HepG2 (cell line): ENCODE measurements at regions of chr2 and their contacts with region 1.

Region 1: DNA sequence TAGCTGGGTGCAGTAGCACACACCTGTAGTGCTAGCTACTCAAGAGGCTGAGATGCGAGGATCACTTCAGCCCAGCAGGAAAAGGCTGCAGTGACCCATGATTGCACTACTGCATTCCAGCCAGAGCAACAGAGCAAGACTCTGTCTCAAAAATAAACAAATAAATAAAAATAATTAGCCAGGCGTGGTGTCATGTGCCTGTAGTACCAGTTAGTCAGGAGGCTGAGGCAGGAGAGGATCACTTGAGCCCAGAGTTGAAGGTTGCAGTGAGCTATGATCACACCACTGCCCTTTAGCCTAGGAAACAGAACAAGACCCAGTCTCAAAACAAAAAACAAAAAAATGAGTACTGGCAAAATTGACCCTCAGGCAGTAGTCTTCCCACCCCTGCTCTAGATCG is 61.9 kb upstream of the PPP1CB start:
- DNase-seq: no peak
- ATAC-seq: no peak
- H3K4me3 ChIP-seq: no peak overlapping the region
- H3K27ac ChIP-seq: no peak overlapping the region
- H3K4me1 ChIP-seq: peaks cover 25% of the 10 kb centered on the region
- H3K27me3 ChIP-seq: peaks cover 0 to 11% of the 10 kb centered on the region in 2 experiments; a peak in 2 of 5 replicates
- CTCF ChIP-seq: no peak
- EP300 ChIP-seq: no peak
- POLR2A ChIP-seq: no peak
- RAD21 ChIP-seq: no peak

Region 2: GRCh38 chr2:28621172-28622100 is 68.3 kb before region 1 on chr2:
- CTCF ChIA-PET with region 1: no interaction called
- POLR2A ChIA-PET with region 1: no interaction called
- in situ Hi-C with region 1: no loop called
- intact Hi-C with region 1: loop called (anchors 2 kb)
- DNase-seq: peak; percentile 83
- ATAC-seq: peak; percentile 91
- H3K4me3 ChIP-seq: peak overlapping the region in 2 of 3 experiments; percentile 3 to 54; a peak in 4 of 6 replicates
- H3K27ac ChIP-seq: peak overlapping the region; percentile 61
- H3K4me1 ChIP-seq: peaks cover 59% of the 10 kb centered on the region
- H3K27me3 ChIP-seq: no peaks in the 10 kb centered on the region; a peak in 1 of 5 replicates
- CTCF ChIP-seq: peak; percentile 94
- EP300 ChIP-seq: peak in 1 of 2 experiments; percentile 69; a peak in 1 of 4 replicates
- POLR2A ChIP-seq: no peak
- RAD21 ChIP-seq: peak; percentile 90